ENCODE measurements at regions of chrX and their contacts with region 1.

Region 1: DNA sequence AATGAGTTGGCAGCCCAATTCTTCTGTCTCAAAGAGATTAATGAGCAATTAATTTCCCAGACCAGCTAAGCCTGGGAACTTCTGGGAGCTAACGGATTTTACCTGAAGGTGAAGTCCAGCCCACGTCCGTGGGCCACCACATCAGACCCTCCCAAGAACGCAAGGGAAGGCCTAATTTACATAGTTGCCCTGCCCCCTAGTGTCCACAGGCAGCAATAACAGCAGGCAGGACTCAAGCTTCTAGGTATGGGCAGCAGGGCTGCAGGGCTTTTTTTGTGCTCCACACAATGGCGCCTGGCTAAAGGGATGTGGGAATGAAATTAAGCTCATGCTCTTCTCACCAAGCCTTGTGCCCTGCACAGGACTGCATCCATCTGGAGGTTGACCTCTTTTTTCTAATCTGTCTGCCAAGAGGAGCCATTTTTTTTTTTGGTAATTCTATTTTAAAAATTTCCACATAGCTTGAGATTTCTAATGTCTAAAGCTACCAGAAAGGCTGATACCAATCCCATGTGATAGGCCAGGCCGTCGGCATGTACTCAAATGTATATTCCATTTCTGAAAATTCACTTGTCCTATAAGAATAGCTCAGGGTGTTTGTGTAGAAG is 111.9 kb upstream of the TMEM164 start:
- DNase-seq: no peak
- ATAC-seq: peak; percentile 65
- H3K4me3 Mint-ChIP-seq: no peak overlapping the region
- H3K27ac Mint-ChIP-seq: peak overlapping the region; percentile 79
- H3K4me1 Mint-ChIP-seq: peaks cover 32% of the 10 kb centered on the region
- H3K27me3 Mint-ChIP-seq: no peaks in the 10 kb centered on the region
- CTCF ChIP-seq: peak; percentile 44

Region 2: GRCh38 chrX:109485470-109486340 is 405.3 kb before region 1 on chrX:
- CTCF ChIA-PET with region 1: interaction called, 9 read pairs
- POLR2A ChIA-PET with region 1: no interaction called
- intact Hi-C with region 1: loop called (anchors 1 kb)
- DNase-seq: no peak
- ATAC-seq: peak; percentile 85
- H3K4me3 Mint-ChIP-seq: no peak overlapping the region
- H3K27ac Mint-ChIP-seq: no peak overlapping the region
- H3K4me1 Mint-ChIP-seq: peaks cover 8% of the 10 kb centered on the region
- H3K27me3 Mint-ChIP-seq: peaks cover 2% of the 10 kb centered on the region
- CTCF ChIP-seq: peak; percentile 38

Region 3: DNA sequence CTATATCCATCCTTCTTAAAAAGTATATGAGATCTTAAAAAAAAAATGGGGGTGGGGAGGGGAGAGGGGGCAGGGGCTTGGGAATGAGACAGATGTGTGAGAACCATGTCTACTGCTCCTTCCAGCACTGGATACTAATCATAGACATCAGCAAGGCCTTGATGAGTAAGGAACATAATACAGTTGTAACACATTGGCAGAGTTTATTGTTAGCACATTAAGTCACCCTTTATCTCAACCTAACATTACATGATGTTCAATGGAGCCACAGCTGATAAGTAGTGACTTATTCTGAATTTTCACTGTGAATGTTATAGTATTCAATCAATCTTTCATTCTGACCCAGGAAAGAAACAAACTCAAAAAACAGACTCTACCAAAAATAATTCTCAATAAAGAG is 218.8 kb before region 1 on chrX:
- CTCF ChIA-PET with region 1: no interaction called
- POLR2A ChIA-PET with region 1: no interaction called
- intact Hi-C with region 1: no loop called
- DNase-seq: no peak
- ATAC-seq: no peak
- H3K4me3 Mint-ChIP-seq: no peak overlapping the region
- H3K27ac Mint-ChIP-seq: no peak overlapping the region
- H3K4me1 Mint-ChIP-seq: no peaks in the 10 kb centered on the region
- H3K27me3 Mint-ChIP-seq: no peaks in the 10 kb centered on the region
- CTCF ChIP-seq: no peak

Region 4: GRCh38 chrX:109709129-109709631 is 181.8 kb before region 1 on chrX:
- CTCF ChIA-PET with region 1: interaction called, 54 read pairs
- POLR2A ChIA-PET with region 1: no interaction called
- intact Hi-C with region 1: loop called (anchors 1 kb)
- DNase-seq: no peak
- ATAC-seq: peak; percentile 69
- H3K4me3 Mint-ChIP-seq: peak overlapping the region; percentile 60
- H3K27ac Mint-ChIP-seq: peak overlapping the region; percentile 67
- H3K4me1 Mint-ChIP-seq: peaks cover 55% of the 10 kb centered on the region
- H3K27me3 Mint-ChIP-seq: no peaks in the 10 kb centered on the region
- CTCF ChIP-seq: no peak

Region 5: DNA sequence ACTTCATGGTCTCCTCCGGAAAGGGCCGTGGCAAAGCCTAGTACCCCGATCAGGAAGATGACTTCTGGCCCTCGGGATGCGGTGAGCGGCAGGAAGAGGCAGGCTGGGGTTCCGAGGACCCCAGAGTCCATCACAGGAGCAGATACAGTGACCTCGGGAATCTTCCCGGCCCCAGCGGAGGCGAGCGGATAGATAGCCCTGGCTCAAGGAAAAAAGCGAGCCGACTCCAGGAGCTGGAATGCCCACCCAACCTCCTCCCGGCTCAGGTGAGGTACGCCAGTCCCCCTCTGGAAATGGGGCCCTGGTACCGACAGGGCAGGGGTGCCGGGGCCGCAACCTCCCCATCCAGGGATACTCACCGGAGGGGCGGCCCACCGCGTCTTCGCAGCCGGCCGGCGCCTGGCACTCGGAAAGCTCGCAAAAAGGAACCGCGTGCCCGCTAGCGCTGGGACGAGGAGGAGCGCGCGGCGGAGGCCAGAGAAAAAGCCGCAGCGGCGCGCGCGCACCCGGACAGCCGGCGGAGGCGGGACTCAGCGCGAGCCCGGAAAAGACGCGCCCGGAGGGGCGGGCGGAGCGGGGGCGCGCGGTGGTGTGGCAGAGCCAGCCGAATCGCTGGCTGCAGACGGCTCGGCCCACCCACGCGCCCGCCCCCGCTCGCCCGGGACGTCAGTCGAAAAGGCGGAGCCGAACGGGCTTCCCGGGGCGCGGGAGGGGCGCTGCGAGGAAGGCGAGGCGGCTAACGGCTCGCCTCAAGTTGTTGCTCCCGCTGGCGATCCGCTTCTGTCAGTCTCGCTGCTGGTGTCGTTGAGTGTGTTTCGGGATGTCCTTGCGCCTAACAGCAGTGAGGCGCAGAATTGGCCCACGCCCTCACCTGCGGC is 158.0 kb before region 1 on chrX and contains the start of gene ACSL4:
- CTCF ChIA-PET with region 1: interaction called, 4 read pairs
- POLR2A ChIA-PET with region 1: interaction called, 3 read pairs
- intact Hi-C with region 1: loop called (anchors 5 kb)
- DNase-seq: peak; percentile 82
- ATAC-seq: peak; percentile 92
- H3K4me3 Mint-ChIP-seq: peak within 1 kb of the TSS; percentile 99
- H3K27ac Mint-ChIP-seq: peak within 1 kb of the TSS; percentile 96
- H3K4me1 Mint-ChIP-seq: peaks cover 43% of the 10 kb centered on the region
- H3K27me3 Mint-ChIP-seq: no peaks in the 10 kb centered on the region
- CTCF ChIP-seq: no peak
- total RNA-seq, gene ACSL4: 36.7 and 55.2 TPM in 2 replicates

Region 6: DNA sequence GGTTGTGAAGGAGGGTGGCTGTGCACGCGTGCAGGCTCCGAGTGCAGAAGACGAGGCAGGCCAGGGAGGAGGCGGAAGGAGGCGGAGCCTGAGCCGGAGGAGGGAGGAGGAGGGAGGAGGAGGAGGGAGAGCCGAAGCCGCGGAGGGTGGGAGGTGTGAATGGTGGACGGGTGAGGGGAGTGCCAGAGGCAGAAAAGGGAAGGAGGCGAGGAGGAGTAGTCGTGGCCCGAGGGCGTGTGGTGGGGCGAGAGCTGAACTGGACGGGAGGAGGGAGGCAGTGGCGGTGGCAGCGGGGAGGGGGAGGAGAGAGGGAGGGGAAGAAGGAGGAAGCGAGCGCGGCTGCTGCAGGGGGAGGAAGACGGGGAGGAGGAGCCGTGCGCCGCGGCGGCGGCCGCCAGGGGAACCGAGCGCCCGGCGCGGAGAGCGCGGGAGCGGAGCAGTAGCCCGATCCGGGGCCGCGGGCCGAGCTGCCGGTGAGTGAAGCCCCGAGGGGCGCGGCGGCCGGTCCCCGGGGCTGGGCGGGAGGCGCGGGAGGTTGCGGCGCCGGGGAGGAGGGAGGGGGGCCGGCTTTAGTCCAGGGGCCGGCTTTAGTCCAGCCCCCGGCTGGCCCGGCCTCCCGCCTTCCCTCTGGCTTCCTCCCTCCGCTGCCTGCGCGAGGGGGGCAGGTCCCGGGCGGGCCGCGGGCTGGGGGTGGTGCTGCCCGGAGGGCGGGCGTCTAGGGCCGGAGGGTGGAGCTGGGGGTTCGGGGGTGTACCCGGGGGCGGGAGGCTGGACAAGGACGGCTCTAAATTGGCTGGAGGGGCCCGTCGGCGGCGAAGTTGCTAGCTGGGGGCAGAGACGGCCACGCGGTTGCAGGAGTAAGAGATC is 111.5 kb after region 1 on chrX and contains the start of gene TMEM164:
- CTCF ChIA-PET with region 1: no interaction called
- POLR2A ChIA-PET with region 1: interaction called, 8 read pairs
- intact Hi-C with region 1: loop called (anchors 1 kb)
- DNase-seq: peak; percentile 71
- ATAC-seq: peak; percentile 74
- H3K4me3 Mint-ChIP-seq: peak within 1 kb of the TSS; percentile 87
- H3K27ac Mint-ChIP-seq: peak within 1 kb of the TSS; percentile 92
- H3K4me1 Mint-ChIP-seq: peaks cover 38% of the 10 kb centered on the region
- H3K27me3 Mint-ChIP-seq: no peaks in the 10 kb centered on the region
- CTCF ChIP-seq: no peak
- total RNA-seq, gene TMEM164: 20.4 and 21.8 TPM in 2 replicates

Measured in activated B cell treated with CpG ODN at 0.5 μM for 24 hours (primary cell).